ENCODE measurements at regions of chr11 and their contacts with region 1.

Region 1: GRCh38 chr11:67507864-67508485 is at the start of gene CDK2AP2:
- DNase-seq: peak; percentile 99
- ATAC-seq: peak; percentile 82 to 88
- H3K4me3 ChIP-seq: peak within 1 kb of the TSS; percentile 77 to 87 (median 85)
- H3K27ac ChIP-seq: peak within 1 kb of the TSS; percentile 94 to 99 (median 96)
- H3K4me1 ChIP-seq: peaks cover 26 to 35% of the 10 kb centered on the region in 2 donors
- H3K27me3 ChIP-seq: peaks cover 0 to 13% (median 0%) of the 10 kb centered on the region in 3 donors
- CTCF ChIP-seq: peak in 1 of 5 experiments; percentile 23
- POLR2A ChIP-seq: peak; percentile 97 to 99
- total RNA-seq, gene CDK2AP2: 24.1 to 47.5 (median 37.3) TPM

Region 2: DNA sequence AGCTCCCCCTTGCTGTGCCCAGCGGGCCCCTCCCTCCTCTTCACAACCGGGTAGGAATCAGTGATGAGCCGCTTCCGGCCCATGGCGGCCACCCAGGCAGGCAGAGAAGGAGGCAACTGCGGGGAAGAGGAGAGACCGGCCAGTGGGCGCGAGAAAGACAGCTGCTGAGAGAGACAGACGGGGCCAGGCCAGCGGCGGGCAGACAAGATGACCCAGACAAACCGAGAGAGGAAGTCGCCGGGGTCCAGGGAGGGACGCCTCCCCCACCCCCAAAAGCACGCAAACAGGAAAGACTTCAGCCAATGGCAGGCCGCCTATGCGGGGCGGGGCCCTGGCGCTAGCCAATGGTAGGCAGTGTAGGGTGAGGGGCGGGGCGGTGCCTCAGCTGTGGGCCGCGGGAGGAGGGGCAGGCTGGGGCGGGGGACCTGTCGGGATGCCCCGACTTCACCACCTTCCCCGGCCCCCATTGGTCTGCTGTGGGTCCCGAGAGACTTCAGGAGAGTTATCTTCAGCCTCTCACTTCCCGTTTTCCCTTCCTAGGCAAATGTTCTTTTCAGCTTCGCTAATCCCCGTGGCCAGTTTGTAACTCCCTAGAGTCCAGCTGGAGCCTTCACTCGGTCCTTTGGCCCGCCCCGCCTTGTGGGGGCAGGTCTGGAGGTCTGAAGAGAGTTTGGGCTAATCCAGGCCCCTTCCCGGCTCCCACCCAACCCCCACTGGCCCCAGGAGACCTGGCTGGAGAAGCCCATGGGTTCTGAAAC is 154.5 kb before region 1 on chr11 and contains the start of gene POLD4:
- in situ Hi-C with region 1: no loop called
- intact Hi-C with region 1: loop called (anchors 1 kb)
- DNase-seq: peak; percentile 97 to 99
- ATAC-seq: peak; percentile 82 to 83
- H3K4me3 ChIP-seq: peak within 1 kb of the TSS; percentile 79 to 93 (median 84)
- H3K27ac ChIP-seq: peak within 1 kb of the TSS; percentile 94 to 100 (median 98)
- H3K4me1 ChIP-seq: peaks cover 39 to 48% of the 10 kb centered on the region in 2 donors
- H3K27me3 ChIP-seq: no peaks in the 10 kb centered on the region
- CTCF ChIP-seq: no peak
- POLR2A ChIP-seq: peak; percentile 87 to 90
- total RNA-seq, gene POLD4: 57.4 to 115 (median 87.9) TPM

Region 3: DNA sequence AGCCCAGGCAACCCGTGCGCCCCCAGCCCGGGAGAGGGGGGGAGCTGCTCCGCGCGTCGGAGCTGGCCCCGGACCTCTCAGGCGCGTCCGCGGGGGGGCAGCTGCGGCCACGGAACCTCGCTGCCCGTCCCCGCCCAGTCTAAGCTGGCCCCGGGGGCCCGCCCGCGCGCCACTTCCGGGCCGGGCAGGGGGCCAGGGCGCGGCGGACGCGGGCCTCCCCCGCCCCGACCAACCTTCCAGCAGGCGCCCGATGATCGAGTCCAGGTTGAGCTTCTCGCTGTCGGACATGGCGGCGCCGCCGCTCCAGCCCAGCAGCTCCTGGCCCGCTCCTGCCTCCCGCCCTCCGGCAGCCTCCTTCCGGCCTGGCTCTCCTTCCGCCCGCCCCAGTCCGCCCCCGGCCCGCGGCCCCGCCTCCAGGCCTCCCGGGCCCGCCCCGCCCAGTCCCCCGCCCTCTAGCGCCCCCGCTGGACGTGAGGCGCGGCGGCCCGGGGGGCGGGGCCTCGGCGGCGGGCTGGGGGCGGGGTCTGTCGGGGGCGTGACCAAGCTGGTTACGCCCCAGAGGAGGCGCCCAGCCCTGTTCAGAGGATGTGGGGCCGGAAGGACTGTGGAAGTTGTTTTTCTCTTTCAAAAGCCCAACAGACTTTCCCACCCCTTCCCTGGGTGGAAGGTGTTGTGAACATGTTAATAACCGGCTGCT is 106.3 kb before region 1 on chr11 and contains the start of gene PPP1CA:
- in situ Hi-C with region 1: loop called in 3 of 4 experiments (anchors 10 kb)
- intact Hi-C with region 1: loop called (anchors 1 kb)
- DNase-seq: peak; percentile 81 to 87
- ATAC-seq: peak; percentile 90 to 92
- H3K4me3 ChIP-seq: peak within 1 kb of the TSS; percentile 70 to 97 (median 80)
- H3K27ac ChIP-seq: peak within 1 kb of the TSS; percentile 87 to 96 (median 90)
- H3K4me1 ChIP-seq: peaks cover 20 to 22% of the 10 kb centered on the region in 2 donors
- H3K27me3 ChIP-seq: no peaks in the 10 kb centered on the region
- CTCF ChIP-seq: peak; percentile 33 to 93 (median 55)
- POLR2A ChIP-seq: peak; percentile 75 to 83
- total RNA-seq, gene PPP1CA: 78.4 to 193 (median 124) TPM

Region 4: GRCh38 chr11:67468835-67469811 is 38.9 kb before region 1 on chr11 and contains the start of gene TMEM134:
- in situ Hi-C with region 1: no loop called
- intact Hi-C with region 1: loop called (anchors 1 kb)
- DNase-seq: peak; percentile 89 to 91
- ATAC-seq: peak; percentile 84 to 89
- H3K4me3 ChIP-seq: peak within 1 kb of the TSS; percentile 86 to 98 (median 94)
- H3K27ac ChIP-seq: peak within 1 kb of the TSS; percentile 79 to 96 (median 88)
- H3K4me1 ChIP-seq: peaks cover 10 to 22% of the 10 kb centered on the region in 2 donors
- H3K27me3 ChIP-seq: no peaks in the 10 kb centered on the region
- CTCF ChIP-seq: peak; percentile 24 to 62 (median 57)
- POLR2A ChIP-seq: peak; percentile 54 to 64
- total RNA-seq, gene TMEM134: 79.8 to 155 (median 108) TPM

Region 5: GRCh38 chr11:67583247-67584204 is 75.6 kb after region 1 on chr11 and contains the start of gene GSTP1:
- in situ Hi-C with region 1: no loop called
- intact Hi-C with region 1: loop called (anchors 1 kb)
- DNase-seq: peak; percentile 83 to 90
- ATAC-seq: peak; percentile 90 to 92
- H3K4me3 ChIP-seq: peak within 1 kb of the TSS; percentile 77 to 95 (median 88)
- H3K27ac ChIP-seq: peak within 1 kb of the TSS; percentile 93 to 100 (median 96)
- H3K4me1 ChIP-seq: peaks cover 12 to 16% of the 10 kb centered on the region in 2 donors
- H3K27me3 ChIP-seq: no peaks in the 10 kb centered on the region
- CTCF ChIP-seq: peak; percentile 76 to 94 (median 92)
- POLR2A ChIP-seq: peak; percentile 92
- total RNA-seq, gene GSTP1: 316 to 866 (median 549) TPM